A549 (cell line): ENCODE measurements at regions of chr19 and their contacts with region 1.

Region 1: GRCh38 chr19:35044317-35045117 is 3.0 kb downstream of the HPN start:
- DNase-seq: peak; percentile 76 to 95
- ATAC-seq: peak; percentile 4 to 42; a peak in 4 of 6 replicates
- H3K4me3 ChIP-seq: no peak overlapping the region
- H3K27ac ChIP-seq: no peak overlapping the region
- H3K4me1 ChIP-seq: peaks cover 29% of the 10 kb centered on the region
- CTCF ChIP-seq: peak; percentile 99
- EP300 ChIP-seq: no peak
- POLR2A ChIP-seq: no peak
- RAD21 ChIP-seq: peak; percentile 76 to 82

Region 2: DNA sequence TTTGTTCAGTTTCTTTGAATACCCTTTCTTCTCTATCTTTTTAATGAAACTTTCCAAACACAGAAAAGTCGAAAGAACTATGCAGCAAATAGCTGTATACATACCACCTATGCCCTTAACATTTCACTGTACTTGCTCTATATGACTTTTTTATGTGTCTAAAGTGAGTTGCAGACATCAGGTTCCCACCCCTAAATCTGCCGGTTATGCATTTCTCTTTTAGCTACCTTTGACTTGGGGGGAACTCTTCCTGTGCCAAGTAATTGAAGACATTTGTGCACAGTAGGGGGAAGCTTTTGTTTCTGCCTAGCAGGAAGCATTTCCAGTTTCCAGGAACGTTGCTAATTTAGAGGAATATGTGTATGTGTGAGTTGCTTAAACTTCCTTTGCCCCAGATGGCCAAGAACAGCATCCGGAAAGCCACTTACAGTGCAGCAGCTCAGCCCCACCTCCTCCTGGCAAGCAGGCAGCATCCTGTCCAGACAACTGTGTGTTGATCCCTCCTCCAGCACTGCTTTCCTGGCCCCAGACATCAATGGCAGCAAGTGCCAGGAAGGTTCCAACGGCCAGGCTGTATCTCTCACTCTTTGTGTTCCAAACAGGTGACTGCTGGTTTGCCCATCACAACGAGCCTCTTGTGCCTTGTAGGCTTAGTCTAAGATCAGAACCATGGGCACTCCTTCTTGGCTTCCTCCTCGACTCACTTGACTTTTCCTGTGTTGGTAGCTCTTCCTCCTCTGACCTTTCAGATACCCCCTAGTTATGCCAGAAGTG is 59.1 kb before region 1 on chr19:
- CTCF ChIA-PET with region 1: interaction called, 40 read pairs
- POLR2A ChIA-PET with region 1: no interaction called
- DNase-seq: no peak
- ATAC-seq: peak in 1 of 2 experiments; percentile 36; a peak in 1 of 6 replicates
- H3K4me3 ChIP-seq: no peak overlapping the region
- H3K27ac ChIP-seq: no peak overlapping the region
- H3K4me1 ChIP-seq: no peaks in the 10 kb centered on the region
- CTCF ChIP-seq: no peak
- EP300 ChIP-seq: no peak
- POLR2A ChIP-seq: no peak
- RAD21 ChIP-seq: no peak

Region 3: DNA sequence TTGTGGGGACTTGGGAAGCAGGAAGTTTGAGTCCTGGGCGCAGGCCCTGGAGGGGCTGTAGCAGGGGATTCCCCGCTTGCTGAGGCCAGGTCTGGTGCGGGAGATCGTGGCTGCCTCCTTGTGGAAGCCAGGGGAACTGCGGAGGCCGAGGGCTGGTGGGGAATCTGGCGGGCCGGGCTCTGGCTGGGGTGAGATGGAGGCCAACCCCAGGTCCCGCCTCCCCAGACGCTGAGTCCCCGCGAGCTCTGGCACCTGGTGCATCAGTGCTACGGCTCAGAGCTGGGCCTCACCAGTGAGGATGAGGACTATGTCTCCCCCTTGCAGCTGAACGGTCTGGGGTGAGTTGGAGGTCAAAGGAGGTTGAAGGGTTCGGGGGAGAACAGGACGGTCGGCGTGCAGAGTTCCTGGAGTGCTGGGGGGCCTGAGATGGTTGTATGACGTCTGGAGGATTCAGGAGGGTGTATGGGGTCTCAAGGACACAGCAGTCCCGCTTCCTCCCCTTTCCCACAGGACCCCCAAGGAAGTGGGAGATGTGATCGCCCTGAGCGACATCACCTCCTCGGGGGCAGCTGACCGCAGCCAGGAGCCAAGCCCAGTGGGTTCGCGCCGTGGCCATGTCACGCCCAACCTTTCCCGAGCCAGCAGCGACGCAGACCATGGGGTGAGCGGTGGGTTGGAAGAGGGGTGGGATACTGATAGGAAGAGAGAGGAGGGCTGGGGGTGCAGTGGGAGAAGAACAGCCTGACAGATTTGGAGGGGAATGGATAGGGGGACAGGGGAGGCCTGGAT is 31.3 kb before region 1 on chr19:
- CTCF ChIA-PET with region 1: interaction called, 29 read pairs
- POLR2A ChIA-PET with region 1: no interaction called
- DNase-seq: peak; percentile 82 to 86
- ATAC-seq: peak; percentile 43 to 70
- H3K4me3 ChIP-seq: no peak overlapping the region
- H3K27ac ChIP-seq: peak overlapping the region; percentile 2 to 42; a peak in 3 of 6 replicates
- H3K4me1 ChIP-seq: peaks cover 26% of the 10 kb centered on the region
- CTCF ChIP-seq: peak; percentile 94
- EP300 ChIP-seq: no peak
- POLR2A ChIP-seq: no peak
- RAD21 ChIP-seq: peak; percentile 98

Region 4: DNA sequence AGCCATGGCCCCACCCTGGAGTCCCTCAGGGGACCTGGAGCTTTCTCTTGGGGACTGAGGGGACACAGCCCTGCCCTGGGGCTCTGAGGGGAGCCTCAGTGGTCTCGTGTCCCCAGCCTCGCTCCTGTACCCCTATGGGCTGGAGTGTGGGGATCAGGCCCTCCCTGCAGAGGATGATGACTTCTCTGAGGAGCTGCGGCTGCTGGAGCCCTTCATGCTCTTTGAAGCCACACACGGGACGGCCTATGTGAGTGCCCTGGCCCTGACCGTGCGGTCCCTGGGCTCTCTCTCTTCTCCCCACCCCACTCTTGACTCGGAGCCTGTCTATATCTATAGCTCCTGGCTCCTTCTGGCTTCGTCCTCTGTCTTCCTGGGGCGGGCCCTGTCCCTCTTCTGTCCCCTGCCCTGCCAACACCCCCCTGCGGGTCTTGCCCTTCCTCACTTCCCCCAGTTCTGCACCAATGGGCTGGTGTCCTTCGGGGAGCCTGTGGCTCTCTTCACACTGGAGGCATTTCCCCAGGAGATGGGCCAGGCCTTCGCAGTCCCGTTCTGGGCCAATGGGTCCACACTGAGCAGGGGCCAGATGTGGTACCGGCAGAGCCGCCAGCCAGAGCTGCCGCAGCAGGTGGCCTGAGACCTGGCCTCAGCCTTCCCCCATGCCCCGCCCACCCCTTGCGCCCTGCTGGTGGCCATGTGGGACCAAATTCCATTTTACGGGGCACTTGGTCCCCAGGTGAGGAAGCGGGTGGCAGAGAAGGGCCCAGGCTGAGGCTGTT is 30.1 kb after region 1 on chr19:
- CTCF ChIA-PET with region 1: interaction called, 102 read pairs
- POLR2A ChIA-PET with region 1: no interaction called
- DNase-seq: no peak
- ATAC-seq: peak in 1 of 2 experiments; percentile 30; a peak in 3 of 6 replicates
- H3K4me3 ChIP-seq: no peak overlapping the region
- H3K27ac ChIP-seq: no peak overlapping the region
- H3K4me1 ChIP-seq: no peaks in the 10 kb centered on the region
- CTCF ChIP-seq: no peak
- EP300 ChIP-seq: no peak
- POLR2A ChIP-seq: no peak
- RAD21 ChIP-seq: no peak

Region 5: GRCh38 chr19:35114353-35115176 is 70.0 kb after region 1 on chr19:
- CTCF ChIA-PET with region 1: interaction called, 14 read pairs
- POLR2A ChIA-PET with region 1: no interaction called
- DNase-seq: peak; percentile 74 to 95
- ATAC-seq: peak; percentile 45 to 86
- H3K4me3 ChIP-seq: peak overlapping the region; percentile 6; the same call in 2 of the 3 replicates
- H3K27ac ChIP-seq: peak overlapping the region; percentile 19 to 36; a peak in 3 of 6 replicates
- H3K4me1 ChIP-seq: peaks cover 13% of the 10 kb centered on the region; the same call in 1 of the 3 replicates
- CTCF ChIP-seq: peak; percentile 98
- EP300 ChIP-seq: no peak
- POLR2A ChIP-seq: no peak
- RAD21 ChIP-seq: peak; percentile 80

Region 6: DNA sequence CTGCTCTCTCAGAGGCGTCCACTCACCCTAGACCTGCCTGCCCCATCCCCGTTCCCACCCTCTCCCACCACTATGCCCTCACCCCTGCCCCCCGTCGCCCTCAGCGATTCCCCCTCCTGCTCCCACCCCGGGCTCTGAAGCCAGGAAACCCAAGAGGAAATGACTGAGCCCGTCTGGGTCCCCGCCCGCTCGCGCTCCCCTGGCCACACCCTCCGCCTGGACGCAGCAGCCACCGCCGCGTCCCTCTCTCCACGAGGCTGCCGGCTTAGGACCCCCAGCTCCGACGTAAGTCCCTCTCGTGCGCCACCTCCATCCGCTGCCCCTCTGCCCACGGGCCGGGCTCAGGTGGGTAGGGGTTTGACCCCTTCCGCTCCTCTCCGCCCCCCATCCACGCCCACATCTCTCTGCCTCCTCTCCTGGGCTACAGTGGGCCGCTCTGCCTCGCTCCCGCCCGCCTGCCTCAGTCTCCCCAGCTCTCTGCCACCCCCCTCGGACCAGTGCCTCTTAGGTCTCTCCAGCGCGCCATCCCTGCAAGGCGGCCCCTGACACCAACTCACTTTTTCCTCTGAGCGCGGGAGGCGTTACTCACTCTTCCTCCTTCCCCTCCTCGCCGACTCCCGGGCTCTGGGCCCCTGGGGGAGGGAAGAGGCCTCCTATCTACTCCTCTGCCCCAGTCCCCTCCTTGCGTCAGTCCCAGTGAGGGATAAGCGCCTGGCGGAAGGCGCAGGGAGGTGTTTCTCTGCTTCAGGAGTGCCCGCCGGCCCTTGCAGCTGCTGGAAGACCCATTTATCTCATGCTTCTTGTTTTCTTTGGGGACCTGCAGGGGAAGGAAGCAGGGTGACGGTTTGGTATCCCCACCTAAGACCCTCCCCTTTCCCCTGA is 110.2 kb after region 1 on chr19 and contains the start of gene FXYD5:
- CTCF ChIA-PET with region 1: interaction called, 14 read pairs
- POLR2A ChIA-PET with region 1: no interaction called
- DNase-seq: peak; percentile 76 to 96
- ATAC-seq: peak; percentile 74 to 88
- H3K4me3 ChIP-seq: peak within 1 kb of the TSS; percentile 68
- H3K27ac ChIP-seq: peak within 1 kb of the TSS; percentile 79 to 90
- H3K4me1 ChIP-seq: peaks cover 9% of the 10 kb centered on the region; the same call in 1 of the 3 replicates
- CTCF ChIP-seq: no peak
- EP300 ChIP-seq: no peak
- POLR2A ChIP-seq: peak; percentile 69
- RAD21 ChIP-seq: no peak
- polyA plus RNA-seq, gene FXYD5: 70.8 and 77.3 TPM in 2 replicates